ENCODE measurements at regions of chr11 and their contacts with region 1.

Region 1: DNA sequence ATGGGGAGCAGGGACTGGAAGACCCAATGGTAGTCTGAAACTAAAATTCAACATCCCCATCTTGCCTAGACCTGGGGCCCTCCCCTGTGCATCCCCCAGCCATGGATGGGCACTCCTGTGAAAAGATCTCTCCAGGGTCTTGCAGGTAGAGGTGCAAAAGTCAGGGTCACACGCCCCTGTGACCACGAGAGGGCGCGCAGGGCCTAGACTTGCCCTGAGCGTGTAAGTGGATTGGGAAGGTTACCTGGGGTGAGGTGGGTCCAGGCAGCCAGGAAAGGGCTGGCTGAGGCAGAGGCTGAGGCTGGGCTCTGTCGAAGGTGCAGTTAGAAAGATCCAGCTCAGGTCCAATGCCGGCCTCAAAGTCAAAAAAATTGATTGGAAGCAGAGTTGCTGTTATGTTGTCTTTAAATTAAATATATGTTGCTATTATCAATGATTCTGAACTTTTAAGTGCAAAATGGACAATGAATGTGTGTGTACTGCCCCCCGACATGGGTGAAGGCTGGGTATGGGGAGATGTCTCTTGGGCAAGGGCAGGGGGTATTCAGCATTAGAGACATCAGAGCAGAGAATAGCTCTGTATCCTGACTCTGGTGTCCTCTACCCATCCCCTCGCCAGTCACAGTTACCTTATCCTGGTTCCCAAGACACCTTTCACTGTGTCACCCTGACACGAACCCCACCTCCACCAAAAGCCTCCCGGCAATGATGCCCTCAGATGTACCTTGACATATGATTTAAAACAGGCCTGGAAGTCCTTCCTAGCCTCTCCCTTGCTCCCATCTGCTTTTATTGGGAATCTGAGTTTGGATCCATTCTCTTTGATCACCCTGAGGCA is 4.7 kb upstream of the POU2F3 start:
- DNase-seq: peak; percentile 72 to 78
- H3K4me3 ChIP-seq: no peak overlapping the region
- H3K27ac ChIP-seq: peak overlapping the region; percentile 45 to 52
- H3K4me1 ChIP-seq: peaks cover 0 to under 1% of the 10 kb centered on the region in 2 donors
- H3K27me3 ChIP-seq: peaks cover 0 to 6% of the 10 kb centered on the region in 2 donors
- CTCF ChIP-seq: peak; percentile 47 to 86 (median 77)
- POLR2A ChIP-seq: no peak

Region 2: DNA sequence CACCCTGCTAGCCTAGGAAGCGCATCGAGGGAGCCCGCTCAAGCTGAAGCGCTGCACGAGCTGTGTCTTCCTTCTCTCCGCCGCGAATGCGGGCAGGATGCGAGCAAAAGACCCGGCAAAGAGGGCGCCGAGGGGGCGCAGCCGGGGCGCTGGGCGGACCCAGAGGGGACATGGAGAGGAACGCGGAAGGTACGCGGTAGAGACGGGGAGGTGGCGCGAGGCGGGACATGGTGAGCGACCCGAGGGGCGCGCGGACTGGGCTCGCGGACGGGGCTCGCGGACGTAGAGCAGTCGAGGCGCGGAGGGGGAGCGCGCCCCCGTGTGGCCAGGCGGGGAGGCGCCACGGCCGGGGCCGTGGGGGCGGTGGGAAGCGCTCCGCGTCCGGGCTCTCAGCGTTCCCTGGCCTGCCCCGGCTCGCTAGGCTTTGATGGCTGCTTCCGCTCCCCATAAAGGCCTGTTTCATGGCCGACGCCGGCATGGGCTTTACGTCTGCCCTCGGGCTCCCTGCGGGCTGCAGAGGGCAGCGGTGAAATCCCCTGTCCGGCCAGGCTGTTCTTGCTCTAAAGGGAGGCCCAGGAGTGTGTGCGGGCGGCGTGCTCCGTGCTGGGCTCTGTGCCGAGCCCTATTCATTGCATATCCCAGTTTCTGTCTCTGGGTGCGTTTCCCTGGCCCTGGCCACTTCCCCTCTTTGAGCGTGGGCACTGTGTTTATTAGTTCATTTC is 66.1 kb before region 1 on chr11:
- intact Hi-C with region 1: loop called (anchors 5 kb)
- DNase-seq: peak in 1 of 2 donors; percentile 59
- H3K4me3 ChIP-seq: peak overlapping the region; percentile 39 to 81 (median 56)
- H3K27ac ChIP-seq: peak overlapping the region; percentile 57 to 76
- H3K4me1 ChIP-seq: peaks cover 0 to 5% of the 10 kb centered on the region in 2 donors
- H3K27me3 ChIP-seq: no peaks in the 10 kb centered on the region
- CTCF ChIP-seq: peak; percentile 40 to 82 (median 62)
- POLR2A ChIP-seq: no peak

Region 3: GRCh38 chr11:120215634-120216033 is 19.6 kb before region 1 on chr11:
- intact Hi-C with region 1: no loop called
- DNase-seq: no peak
- H3K4me3 ChIP-seq: peak overlapping the region in 1 of 3 donors; percentile 7
- H3K27ac ChIP-seq: peak overlapping the region; percentile 67 to 82
- H3K4me1 ChIP-seq: peaks cover 0 to 21% of the 10 kb centered on the region in 2 donors
- H3K27me3 ChIP-seq: no peaks in the 10 kb centered on the region
- CTCF ChIP-seq: no peak
- POLR2A ChIP-seq: no peak

Region 4: DNA sequence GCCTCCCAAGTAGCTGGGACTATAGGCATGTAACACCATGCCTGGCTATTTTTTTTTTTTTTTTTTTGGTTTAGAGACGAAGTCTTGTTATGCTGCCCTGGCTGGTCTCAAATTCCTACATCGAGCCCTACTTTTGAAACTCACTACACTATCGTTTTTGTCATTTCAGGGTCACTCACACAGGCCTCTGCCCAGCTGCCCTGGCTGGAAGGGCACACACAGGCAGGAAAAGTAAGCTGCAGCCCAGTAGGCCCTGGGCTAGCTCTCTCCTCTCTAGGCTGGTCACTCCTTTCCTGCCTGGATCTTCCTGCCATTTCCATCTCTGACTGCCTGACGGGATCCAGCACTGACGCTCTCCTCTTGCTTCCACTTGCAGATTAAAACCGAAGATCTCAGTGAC is 62.6 kb after region 1 on chr11:
- intact Hi-C with region 1: loop called (anchors 2 kb)
- DNase-seq: no peak
- H3K4me3 ChIP-seq: no peak overlapping the region
- H3K27ac ChIP-seq: no peak overlapping the region
- H3K4me1 ChIP-seq: peaks cover 0 to 14% of the 10 kb centered on the region in 2 donors
- H3K27me3 ChIP-seq: no peaks in the 10 kb centered on the region
- CTCF ChIP-seq: no peak
- POLR2A ChIP-seq: no peak